Heart left ventricle (tissue), 16 donors: ENCODE measurements at regions of chr9 and their contacts with region 1.

Region 1: DNA sequence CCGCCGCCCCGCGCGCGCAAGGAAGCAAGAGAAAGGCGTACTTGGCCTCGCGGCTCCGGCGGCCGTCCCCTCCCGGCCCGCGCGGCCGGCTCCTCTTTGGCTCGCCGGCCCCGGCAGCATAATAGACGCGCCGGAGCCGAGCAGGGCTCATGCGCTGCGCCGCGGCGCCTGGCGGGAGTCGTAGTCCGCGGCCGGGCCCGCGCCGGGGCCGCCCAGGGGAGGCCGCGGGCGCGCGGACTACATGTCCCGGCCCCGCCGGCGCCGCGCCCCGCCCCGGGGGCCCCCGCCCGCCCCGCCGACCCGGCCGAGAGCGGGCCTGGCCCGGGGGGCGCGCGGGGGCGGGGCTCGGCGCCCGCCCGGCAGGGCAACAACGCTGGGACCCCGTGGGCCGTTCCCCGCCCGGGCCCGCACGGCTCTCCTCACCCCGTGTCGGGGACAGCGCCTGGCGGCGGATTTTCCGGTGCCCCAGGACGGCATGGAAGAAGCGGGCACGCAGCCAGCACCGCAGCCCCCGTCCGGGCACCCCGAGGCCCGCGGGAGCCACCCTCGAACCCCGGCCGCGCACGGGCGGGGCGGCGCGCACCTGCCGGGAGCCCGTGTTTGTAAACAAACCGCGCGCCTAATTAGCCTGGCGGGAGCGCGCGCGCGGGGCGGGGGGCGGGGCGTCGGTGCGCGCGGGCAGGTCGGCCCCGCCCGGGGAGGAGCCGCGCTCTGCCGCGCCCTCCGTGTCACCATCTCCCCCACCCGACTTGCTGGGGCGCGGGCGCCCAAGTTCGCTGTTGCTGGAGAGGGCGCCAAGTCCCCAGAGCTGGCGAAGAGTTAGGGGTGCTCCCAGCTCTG is at the start of gene BRD3:
- DNase-seq: peak; percentile 87 to 93 (median 89)
- ATAC-seq: peak; percentile 84 to 93 (median 90)
- H3K4me3 ChIP-seq: peak within 1 kb of the TSS; percentile 64 to 100 (median 90)
- H3K27ac ChIP-seq: peak within 1 kb of the TSS; percentile 95 to 100 (median 98)
- H3K4me1 ChIP-seq: peaks cover 0 to 45% (median 32%) of the 10 kb centered on the region in 12 donors
- H3K27me3 ChIP-seq: peaks cover 0 to 2% (median 0%) of the 10 kb centered on the region in 9 donors
- CTCF ChIP-seq: no peak
- POLR2A ChIP-seq: peak; percentile 10 to 75
- total RNA-seq, gene BRD3: 14.0 to 37.3 (median 29.3) TPM

Region 2: DNA sequence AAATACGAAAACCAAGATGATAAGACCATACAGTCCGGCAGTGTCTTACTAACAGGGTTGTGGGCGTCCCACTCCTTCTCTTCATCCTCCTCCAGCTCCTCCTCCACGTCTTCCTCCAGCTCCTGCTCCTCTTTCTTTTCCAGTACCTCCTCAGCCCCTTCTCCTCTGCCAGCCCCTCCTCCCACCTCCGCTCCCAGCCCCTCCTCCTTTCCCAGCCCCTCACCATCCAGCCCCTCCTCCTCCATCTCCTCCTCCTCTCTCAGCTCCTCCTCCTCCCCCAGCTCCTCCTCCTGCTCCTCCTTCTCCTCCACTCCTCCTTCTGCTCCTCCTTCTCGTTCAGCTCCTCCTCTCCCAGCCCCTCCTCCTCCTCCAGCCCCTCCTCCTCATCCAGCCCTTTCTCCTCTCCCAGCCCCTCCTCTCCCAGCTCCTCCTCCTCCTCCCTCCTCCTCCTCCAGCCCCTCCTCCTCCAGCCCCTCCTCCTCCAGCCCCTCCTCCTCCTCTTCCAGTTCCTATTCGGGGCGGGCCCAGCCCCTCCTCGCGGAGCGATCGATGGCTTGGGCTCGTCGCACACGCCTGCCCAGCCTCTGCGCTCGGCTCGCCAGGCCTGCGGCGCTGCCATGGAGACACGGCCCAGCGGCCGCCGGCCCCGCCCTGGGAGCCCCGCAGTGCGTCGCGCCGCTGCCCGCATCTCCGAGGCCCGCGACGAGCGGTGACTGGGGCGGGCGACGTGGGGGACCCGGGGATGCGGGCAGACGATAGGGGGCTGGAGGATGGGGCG is 43.1 kb before region 1 on chr9 and contains the start of gene BRD3OS:
- intact Hi-C with region 1: loop called in 8 of 10 experiments (anchors 1 to 5 kb)
- DNase-seq: peak; percentile 96 to 98 (median 97)
- ATAC-seq: peak; percentile 96 to 98 (median 96)
- H3K4me3 ChIP-seq: peak within 1 kb of the TSS; percentile 55 to 96 (median 86)
- H3K27ac ChIP-seq: peak within 1 kb of the TSS in 11 of 12 donors; percentile 12 to 79 (median 51)
- H3K4me1 ChIP-seq: peaks cover 0 to 11% (median 8%) of the 10 kb centered on the region in 12 donors
- H3K27me3 ChIP-seq: no peaks in the 10 kb centered on the region
- CTCF ChIP-seq: no peak
- POLR2A ChIP-seq: peak in 1 of 2 donors; percentile 42
- total RNA-seq, gene BRD3OS: 5.3 to 13.8 (median 9.3) TPM

Region 3: GRCh38 chr9:134135343-134136118 is 67.4 kb after region 1 on chr9 and contains the start of gene WDR5:
- intact Hi-C with region 1: loop called in 8 of 10 experiments (anchors 1 to 10 kb)
- DNase-seq: peak; percentile 94 to 98 (median 96)
- ATAC-seq: peak; percentile 79 to 89 (median 85)
- H3K4me3 ChIP-seq: peak within 1 kb of the TSS; percentile 77 to 98 (median 88)
- H3K27ac ChIP-seq: peak within 1 kb of the TSS; percentile 87 to 95 (median 94)
- H3K4me1 ChIP-seq: peaks cover 0 to 51% (median 39%) of the 10 kb centered on the region in 12 donors
- H3K27me3 ChIP-seq: no peaks in the 10 kb centered on the region
- CTCF ChIP-seq: peak in 9 of 12 donors; percentile 10 to 46 (median 28)
- POLR2A ChIP-seq: no peak
- total RNA-seq, gene WDR5: 13.1 to 23.8 (median 17.2) TPM

Region 4: GRCh38 chr9:134163353-134164196 is 95.5 kb after region 1 on chr9:
- intact Hi-C with region 1: loop called in 1 of 10 experiments (anchors 2 kb)
- DNase-seq: peak; percentile 55 to 84 (median 76)
- ATAC-seq: peak in 2 of 4 donors; percentile 35 to 40
- H3K4me3 ChIP-seq: peak overlapping the region in 1 of 12 donors; percentile 28
- H3K27ac ChIP-seq: peak overlapping the region in 2 of 12 donors; percentile 20 to 83
- H3K4me1 ChIP-seq: peaks cover 0 to 16% (median 7%) of the 10 kb centered on the region in 12 donors
- H3K27me3 ChIP-seq: no peaks in the 10 kb centered on the region
- CTCF ChIP-seq: peak in 10 of 12 donors; percentile 21 to 56 (median 28)
- POLR2A ChIP-seq: no peak